ENCODE measurements at regions of chr2 and their contacts with region 1.

Region 1: GRCh38 chr2:24058564-24059271 is 9.2 kb downstream of the FKBP1B start:
- DNase-seq: no peak
- H3K4me3 Mint-ChIP-seq: no peak overlapping the region
- H3K27ac Mint-ChIP-seq: no peak overlapping the region
- H3K4me1 Mint-ChIP-seq: no peaks in the 10 kb centered on the region
- H3K27me3 Mint-ChIP-seq: no peaks in the 10 kb centered on the region
- CTCF ChIP-seq: no peak

Region 2: DNA sequence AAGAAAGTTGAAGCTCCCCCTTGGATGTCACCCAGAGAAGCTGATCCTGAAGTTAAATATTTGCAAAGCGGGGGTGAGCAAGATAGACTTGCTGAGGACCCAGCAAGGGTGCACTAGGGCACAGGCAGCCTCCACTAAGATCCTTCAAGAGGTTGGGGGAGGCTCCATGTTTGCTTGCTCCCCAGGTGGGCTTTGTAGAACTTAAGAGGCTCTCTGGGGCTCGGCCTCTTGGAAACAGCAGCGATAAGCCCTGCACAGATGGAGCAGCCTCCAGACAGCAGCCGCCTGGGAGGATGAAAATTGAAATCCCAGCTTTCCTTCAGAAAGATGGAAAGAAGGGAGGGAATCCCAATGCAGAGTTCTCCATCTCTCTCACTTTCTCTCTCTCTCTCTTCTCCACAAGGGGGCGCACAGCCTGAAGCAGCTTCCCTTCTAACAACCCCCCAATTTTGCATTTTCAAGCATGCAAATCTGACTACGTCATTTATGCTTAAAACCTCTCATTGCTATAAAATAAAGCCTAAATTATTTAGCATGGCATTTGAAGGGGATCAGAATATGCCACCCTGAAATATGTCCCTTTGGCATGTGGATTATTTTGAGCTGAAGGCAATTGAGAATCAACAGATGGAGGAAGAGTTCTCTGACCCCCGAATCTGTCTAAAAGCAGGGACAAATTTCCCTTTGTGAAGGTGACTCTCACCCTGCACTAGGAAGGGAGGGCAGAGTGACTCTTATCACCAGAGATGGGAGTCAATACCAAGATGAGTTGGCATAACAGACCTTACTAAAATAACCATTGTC is 859.4 kb before region 1 on chr2:
- CTCF ChIA-PET with region 1: no interaction called
- POLR2A ChIA-PET with region 1: no interaction called
- intact Hi-C with region 1: no loop called
- DNase-seq: peak; percentile 62
- H3K4me3 Mint-ChIP-seq: no peak overlapping the region
- H3K27ac Mint-ChIP-seq: no peak overlapping the region
- H3K4me1 Mint-ChIP-seq: no peaks in the 10 kb centered on the region
- H3K27me3 Mint-ChIP-seq: peaks cover 80% of the 10 kb centered on the region
- CTCF ChIP-seq: peak; percentile 63

Region 3: GRCh38 chr2:23988371-23988770 is 70.3 kb before region 1 on chr2:
- CTCF ChIA-PET with region 1: interaction called, 4 read pairs
- POLR2A ChIA-PET with region 1: no interaction called
- intact Hi-C with region 1: loop called (anchors 1 kb)
- DNase-seq: peak; percentile 54
- H3K4me3 Mint-ChIP-seq: no peak overlapping the region
- H3K27ac Mint-ChIP-seq: no peak overlapping the region
- H3K4me1 Mint-ChIP-seq: peaks cover 13% of the 10 kb centered on the region
- H3K27me3 Mint-ChIP-seq: no peaks in the 10 kb centered on the region
- CTCF ChIP-seq: peak; percentile 62

Region 4: GRCh38 chr2:24021193-24021998 is 37.3 kb before region 1 on chr2:
- CTCF ChIA-PET with region 1: no interaction called
- POLR2A ChIA-PET with region 1: no interaction called
- intact Hi-C with region 1: loop called (anchors 1 kb)
- DNase-seq: peak; percentile 79
- H3K4me3 Mint-ChIP-seq: no peak overlapping the region
- H3K27ac Mint-ChIP-seq: peak overlapping the region; percentile 38
- H3K4me1 Mint-ChIP-seq: peaks cover 13% of the 10 kb centered on the region
- H3K27me3 Mint-ChIP-seq: no peaks in the 10 kb centered on the region
- CTCF ChIP-seq: peak; percentile 51